ENCODE measurements at regions of chr14 and their contacts with region 1.

Region 1: DNA sequence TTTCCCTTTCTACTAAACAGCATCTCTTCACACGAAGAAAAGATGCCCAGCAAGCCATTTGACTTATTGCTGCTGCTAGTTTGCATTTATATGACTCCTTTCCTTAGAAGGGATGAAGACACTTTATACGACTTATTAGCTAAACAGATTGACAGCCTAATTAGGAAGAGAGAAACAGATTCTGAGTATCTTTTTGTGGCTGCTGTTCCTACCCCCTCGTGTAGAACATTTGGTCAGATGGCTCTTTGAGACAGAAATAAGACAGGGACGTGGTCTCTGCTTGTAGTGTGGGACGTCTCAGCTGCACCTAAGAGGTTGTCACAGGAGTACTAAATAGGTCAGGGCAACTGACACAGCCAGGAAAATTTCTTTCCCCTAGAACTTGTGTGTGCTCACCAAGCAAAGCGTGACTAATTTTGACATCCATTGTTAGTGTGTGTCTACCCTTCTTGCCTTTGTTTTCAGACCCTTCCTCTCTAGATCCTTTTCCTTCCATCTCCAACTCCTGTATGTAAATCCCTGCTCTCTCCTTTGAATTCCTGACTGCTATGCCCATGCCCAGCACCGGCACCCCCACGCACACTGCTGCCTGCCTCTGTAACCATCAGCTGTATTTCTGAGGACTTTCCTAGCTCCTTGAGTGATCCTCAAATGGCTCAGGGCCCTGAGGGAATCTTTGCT is 83.2 kb downstream of the DAD1 start:
- DNase-seq: no peak
- ATAC-seq: peak; percentile 29
- H3K4me3 ChIP-seq: peak overlapping the region; percentile 68
- H3K27ac ChIP-seq: peak overlapping the region; percentile 98
- H3K4me1 ChIP-seq: peaks cover 50% of the 10 kb centered on the region
- H3K27me3 ChIP-seq: no peaks in the 10 kb centered on the region
- CTCF ChIP-seq: no peak
- EP300 ChIP-seq: peak in 1 of 2 experiments; percentile 49; a peak in 1 of 4 replicates
- POLR2A ChIP-seq: peak; percentile 60; the same call in 1 of the 2 replicates
- RAD21 ChIP-seq: 0 out of 2 replicates have a peak, but pooled peaks have one; percentile 8

Region 2: GRCh38 chr14:21933681-21934080 is 572.2 kb before region 1 on chr14:
- CTCF ChIA-PET with region 1: no interaction called
- POLR2A ChIA-PET with region 1: no interaction called
- RAD21 ChIA-PET with region 1: no interaction called
- SMC1A ChIA-PET with region 1: no interaction called
- in situ Hi-C with region 1: no loop called
- intact Hi-C with region 1: no loop called
- DNase-seq: no peak
- ATAC-seq: no peak
- H3K4me3 ChIP-seq: no peak overlapping the region
- H3K27ac ChIP-seq: no peak overlapping the region
- H3K4me1 ChIP-seq: no peaks in the 10 kb centered on the region
- H3K27me3 ChIP-seq: no peaks in the 10 kb centered on the region
- CTCF ChIP-seq: 0 out of 6 replicates have a peak, but pooled peaks of 1 of the 3 experiments have one; percentile 15
- EP300 ChIP-seq: no peak
- POLR2A ChIP-seq: no peak
- RAD21 ChIP-seq: 0 out of 2 replicates have a peak, but pooled peaks have one; percentile 2

Region 3: DNA sequence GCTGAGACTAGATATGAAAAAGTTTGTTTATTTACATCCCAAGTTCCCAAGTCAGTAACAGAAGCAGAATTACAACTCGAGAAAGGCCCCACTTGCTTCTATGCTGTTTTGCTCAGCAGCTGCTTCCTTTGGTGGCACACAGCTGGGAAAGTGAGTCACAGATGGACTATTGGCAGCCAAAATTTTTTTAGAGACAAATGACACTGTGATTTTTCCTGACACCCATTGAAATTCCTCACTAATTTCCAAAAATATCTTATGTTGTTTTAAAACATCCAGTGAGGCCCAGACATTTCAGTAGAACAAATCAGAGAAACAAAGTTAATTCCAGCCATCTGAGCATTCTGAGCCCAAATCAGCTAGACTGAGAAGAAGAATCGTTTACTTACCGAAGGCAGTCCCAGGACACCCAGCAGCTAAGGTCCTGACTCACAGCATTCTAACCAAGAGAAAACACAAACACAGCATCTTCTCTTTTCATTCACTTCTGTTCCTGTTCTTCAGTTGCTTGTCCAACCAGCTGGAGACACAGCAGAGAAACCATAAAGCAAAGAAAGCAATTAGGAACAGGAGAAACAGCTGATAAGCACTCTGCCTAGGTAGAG is 105.1 kb before region 1 on chr14:
- CTCF ChIA-PET with region 1: no interaction called
- POLR2A ChIA-PET with region 1: no interaction called
- RAD21 ChIA-PET with region 1: no interaction called
- SMC1A ChIA-PET with region 1: no interaction called
- in situ Hi-C with region 1: no loop called
- intact Hi-C with region 1: no loop called
- DNase-seq: no peak
- ATAC-seq: no peak
- H3K4me3 ChIP-seq: no peak overlapping the region
- H3K27ac ChIP-seq: no peak overlapping the region
- H3K4me1 ChIP-seq: no peaks in the 10 kb centered on the region
- H3K27me3 ChIP-seq: peaks cover 0 to 3% of the 10 kb centered on the region in 2 experiments; a peak in 2 of 4 replicates
- CTCF ChIP-seq: no peak
- EP300 ChIP-seq: no peak
- POLR2A ChIP-seq: no peak
- RAD21 ChIP-seq: no peak

Region 4: GRCh38 chr14:22478670-22479069 is 27.2 kb before region 1 on chr14:
- CTCF ChIA-PET with region 1: interaction called, 52 read pairs
- POLR2A ChIA-PET with region 1: interaction called, 875 read pairs
- RAD21 ChIA-PET with region 1: interaction called, 797 read pairs
- SMC1A ChIA-PET with region 1: interaction called, 288 read pairs
- in situ Hi-C with region 1: no loop called
- intact Hi-C with region 1: no loop called
- DNase-seq: no peak
- ATAC-seq: peak; percentile 5; the same call in 1 of the 3 replicates
- H3K4me3 ChIP-seq: peak overlapping the region; percentile 66; the same call in 1 of the 2 replicates
- H3K27ac ChIP-seq: peak overlapping the region; percentile 98
- H3K4me1 ChIP-seq: peaks cover 71% of the 10 kb centered on the region
- H3K27me3 ChIP-seq: no peaks in the 10 kb centered on the region
- CTCF ChIP-seq: no peak
- EP300 ChIP-seq: 0 out of 4 replicates have a peak, but pooled peaks of 1 of the 2 experiments have one; percentile 1
- POLR2A ChIP-seq: no peak
- RAD21 ChIP-seq: no peak

Region 5: GRCh38 chr14:22491683-22492621 is 13.9 kb before region 1 on chr14:
- CTCF ChIA-PET with region 1: interaction called, 101 read pairs
- POLR2A ChIA-PET with region 1: interaction called, 875 read pairs
- RAD21 ChIA-PET with region 1: interaction called, 797 read pairs
- SMC1A ChIA-PET with region 1: interaction called, 357 read pairs
- in situ Hi-C with region 1: no loop called
- intact Hi-C with region 1: loop called (anchors 1 kb)
- DNase-seq: no peak
- ATAC-seq: peak; percentile 57
- H3K4me3 ChIP-seq: peak overlapping the region; percentile 45
- H3K27ac ChIP-seq: peak overlapping the region; percentile 98
- H3K4me1 ChIP-seq: peaks cover 86% of the 10 kb centered on the region
- H3K27me3 ChIP-seq: no peaks in the 10 kb centered on the region
- CTCF ChIP-seq: no peak
- EP300 ChIP-seq: peak; percentile 69 to 92; a peak in 3 of 4 replicates
- POLR2A ChIP-seq: peak; percentile 68
- RAD21 ChIP-seq: peak; percentile 26; the same call in 1 of the 2 replicates

Region 6: DNA sequence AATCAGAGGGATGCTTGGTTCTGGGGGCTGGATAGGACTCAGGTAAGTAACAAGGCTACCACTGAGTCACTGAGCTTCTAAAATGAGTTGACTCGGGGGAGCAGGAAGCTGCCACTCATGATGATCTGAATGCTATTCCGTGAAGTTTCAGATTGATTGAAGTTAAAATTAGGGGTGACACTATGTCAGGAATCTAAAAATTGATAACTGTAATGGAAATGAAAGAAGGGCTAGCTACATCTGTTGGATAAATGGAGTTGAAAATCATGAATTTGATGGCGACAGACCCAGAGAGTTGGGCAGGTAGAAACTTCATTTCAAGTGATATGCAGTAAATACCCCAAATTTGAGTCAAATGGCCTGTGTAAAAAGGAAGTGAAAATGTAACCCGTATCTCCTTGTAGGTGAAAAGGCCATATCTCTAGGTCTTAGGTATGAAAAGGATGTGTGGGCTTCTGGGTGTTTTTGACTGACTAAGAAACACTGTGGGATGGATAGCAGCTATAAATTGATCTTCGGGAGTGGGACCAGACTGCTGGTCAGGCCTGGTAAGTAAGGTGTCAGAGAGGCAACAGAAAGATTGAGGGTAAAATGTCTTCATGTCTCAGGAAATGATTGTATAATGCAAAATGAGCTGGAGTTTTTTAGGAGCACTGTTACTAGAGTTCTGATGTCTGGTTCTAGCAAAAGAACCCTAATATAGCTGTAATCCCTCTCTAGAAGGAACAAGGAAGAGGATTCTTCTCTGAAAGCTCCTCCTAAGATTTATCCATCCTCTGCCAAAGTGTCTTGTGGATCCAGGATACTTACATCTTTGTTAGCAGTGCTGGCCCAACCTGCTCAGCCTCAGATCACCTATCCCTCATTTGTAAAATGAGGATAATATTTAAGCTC is 25.9 kb after region 1 on chr14:
- CTCF ChIA-PET with region 1: interaction called, 100 read pairs
- POLR2A ChIA-PET with region 1: interaction called, 339 read pairs
- RAD21 ChIA-PET with region 1: interaction called, 184 read pairs
- SMC1A ChIA-PET with region 1: interaction called, 399 read pairs
- in situ Hi-C with region 1: no loop called
- intact Hi-C with region 1: loop called (anchors 2 kb)
- DNase-seq: peak; percentile 93
- ATAC-seq: peak; percentile 70
- H3K4me3 ChIP-seq: peak overlapping the region; percentile 67
- H3K27ac ChIP-seq: peak overlapping the region; percentile 97
- H3K4me1 ChIP-seq: peaks cover 72% of the 10 kb centered on the region
- H3K27me3 ChIP-seq: no peaks in the 10 kb centered on the region
- CTCF ChIP-seq: no peak
- EP300 ChIP-seq: peak in 1 of 2 experiments; percentile 93; a peak in 2 of 4 replicates
- POLR2A ChIP-seq: peak; percentile 67
- RAD21 ChIP-seq: 0 out of 2 replicates have a peak, but pooled peaks have one; percentile 5

Region 7: DNA sequence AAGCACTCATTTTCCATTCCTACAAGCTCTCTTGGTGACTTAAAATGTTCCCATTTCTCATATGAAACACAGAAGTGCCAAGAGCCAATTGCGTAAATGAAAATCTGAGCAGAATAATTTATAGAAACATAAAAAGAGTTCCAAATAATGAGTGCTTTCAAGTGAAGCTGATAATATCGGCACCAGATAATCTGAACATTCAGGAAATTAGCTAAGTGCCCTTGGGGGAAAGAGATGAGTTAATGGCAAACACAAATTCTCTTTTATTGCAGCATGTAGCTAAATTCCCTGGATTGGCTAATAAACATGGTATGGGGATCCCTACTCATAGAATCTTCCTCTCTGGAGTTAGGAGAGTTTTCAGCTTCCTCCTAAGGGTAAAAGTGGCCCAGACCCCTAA is 36.5 kb after region 1 on chr14:
- CTCF ChIA-PET with region 1: interaction called, 7 read pairs
- POLR2A ChIA-PET with region 1: interaction called, 67 read pairs
- RAD21 ChIA-PET with region 1: interaction called, 49 read pairs
- SMC1A ChIA-PET with region 1: interaction called, 103 read pairs
- in situ Hi-C with region 1: no loop called
- intact Hi-C with region 1: loop called (anchors 1 kb)
- DNase-seq: no peak
- ATAC-seq: no peak
- H3K4me3 ChIP-seq: no peak overlapping the region
- H3K27ac ChIP-seq: no peak overlapping the region
- H3K4me1 ChIP-seq: peaks cover 23% of the 10 kb centered on the region
- H3K27me3 ChIP-seq: no peaks in the 10 kb centered on the region
- CTCF ChIP-seq: no peak
- EP300 ChIP-seq: no peak
- POLR2A ChIP-seq: no peak
- RAD21 ChIP-seq: no peak

Region 8: DNA sequence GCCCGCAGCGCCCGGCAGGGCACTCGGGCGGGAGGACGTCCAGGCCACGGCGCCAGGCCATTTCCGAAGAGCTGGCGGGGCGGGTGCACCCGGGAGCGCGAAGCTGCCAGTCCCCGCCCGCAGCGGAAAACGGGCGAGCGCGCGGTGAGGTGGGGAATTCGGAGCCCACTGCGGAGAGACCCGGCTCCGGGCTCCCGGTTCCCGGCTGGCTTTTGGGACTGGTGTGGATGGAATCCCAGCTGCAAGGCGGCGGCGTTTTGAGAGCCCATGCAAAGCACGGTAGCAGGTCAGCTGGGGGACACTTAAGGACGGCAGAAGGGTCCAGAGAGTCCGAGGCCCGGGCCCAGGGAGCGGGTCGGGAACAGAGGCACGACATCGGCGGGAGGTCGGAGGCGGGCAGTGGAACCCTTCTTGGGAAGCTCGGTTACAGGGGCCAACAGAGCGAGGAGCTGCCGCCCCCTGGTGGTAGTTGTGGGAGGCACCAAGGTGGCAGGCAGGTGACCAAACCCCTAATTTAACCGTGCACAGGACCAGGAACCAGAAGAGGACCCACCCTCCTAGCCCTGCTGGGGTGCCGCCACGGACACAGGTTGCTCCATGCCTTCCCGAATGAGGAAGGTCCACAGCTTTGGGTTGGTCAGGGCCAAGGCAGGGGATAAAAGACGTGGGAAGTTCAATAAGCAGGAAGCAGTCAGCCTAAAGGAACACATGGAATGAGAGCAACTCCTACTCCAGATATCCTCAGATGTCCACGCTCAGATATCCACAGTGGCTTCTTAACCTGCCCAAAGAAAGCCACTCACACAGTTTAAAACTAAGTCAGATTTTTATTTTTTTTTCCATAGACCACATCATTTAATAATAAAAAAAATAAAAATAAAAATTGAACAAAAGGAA is 552.2 kb after region 1 on chr14:
- CTCF ChIA-PET with region 1: no interaction called
- POLR2A ChIA-PET with region 1: no interaction called
- RAD21 ChIA-PET with region 1: no interaction called
- SMC1A ChIA-PET with region 1: no interaction called
- in situ Hi-C with region 1: no loop called
- intact Hi-C with region 1: no loop called
- DNase-seq: peak; percentile 40
- ATAC-seq: peak; percentile 82
- H3K4me3 ChIP-seq: peak overlapping the region; percentile 79
- H3K27ac ChIP-seq: no peak overlapping the region
- H3K4me1 ChIP-seq: peaks cover 12% of the 10 kb centered on the region
- H3K27me3 ChIP-seq: no peaks in the 10 kb centered on the region
- CTCF ChIP-seq: peak; percentile 92 to 97 (median 96); a peak in 5 of 6 replicates
- EP300 ChIP-seq: no peak
- POLR2A ChIP-seq: peak; percentile 74
- RAD21 ChIP-seq: peak; percentile 78

Measured in GM12878 (cell line).